ENCODE measurements at regions of chr3 and their contacts with region 1.

Region 1: DNA sequence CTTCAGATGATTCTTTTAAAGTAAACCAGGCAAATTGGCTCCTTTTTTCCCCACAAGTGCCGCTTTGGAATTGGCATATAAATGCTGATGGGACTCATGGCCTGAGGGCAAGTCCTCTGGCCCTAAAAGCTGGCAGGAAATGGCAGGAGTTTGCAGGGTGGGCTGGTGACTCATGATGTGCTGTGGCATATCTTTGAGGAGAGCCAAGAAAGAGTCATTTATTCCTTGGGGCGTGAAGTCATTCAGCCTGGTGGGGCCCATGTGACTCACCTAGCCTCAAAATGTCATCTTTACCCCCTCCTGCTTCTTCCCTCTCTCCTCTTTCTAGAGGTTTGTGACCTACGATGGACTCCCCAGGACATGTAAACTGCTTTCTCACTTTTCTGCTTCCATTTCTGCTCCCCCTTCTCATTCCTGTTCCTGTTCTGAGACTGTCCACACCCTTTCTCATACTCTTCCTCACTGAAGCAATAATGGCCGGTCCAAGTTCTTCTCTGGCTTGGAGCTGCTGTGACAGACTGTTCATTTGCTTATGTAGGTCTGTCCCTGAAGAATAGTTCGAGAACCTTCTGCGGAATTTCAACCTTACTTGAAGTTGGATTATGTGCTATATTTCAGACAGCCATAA is 326.1 kb downstream of the SATB1 start:
- DNase-seq: peak; percentile 99
- ATAC-seq: peak; percentile 83
- H3K4me3 ChIP-seq: peak overlapping the region; percentile 41; the same call in 1 of the 2 replicates
- H3K27ac ChIP-seq: peak overlapping the region; percentile 99
- H3K4me1 ChIP-seq: peaks cover 43% of the 10 kb centered on the region
- H3K27me3 ChIP-seq: no peaks in the 10 kb centered on the region
- CTCF ChIP-seq: no peak

Region 2: DNA sequence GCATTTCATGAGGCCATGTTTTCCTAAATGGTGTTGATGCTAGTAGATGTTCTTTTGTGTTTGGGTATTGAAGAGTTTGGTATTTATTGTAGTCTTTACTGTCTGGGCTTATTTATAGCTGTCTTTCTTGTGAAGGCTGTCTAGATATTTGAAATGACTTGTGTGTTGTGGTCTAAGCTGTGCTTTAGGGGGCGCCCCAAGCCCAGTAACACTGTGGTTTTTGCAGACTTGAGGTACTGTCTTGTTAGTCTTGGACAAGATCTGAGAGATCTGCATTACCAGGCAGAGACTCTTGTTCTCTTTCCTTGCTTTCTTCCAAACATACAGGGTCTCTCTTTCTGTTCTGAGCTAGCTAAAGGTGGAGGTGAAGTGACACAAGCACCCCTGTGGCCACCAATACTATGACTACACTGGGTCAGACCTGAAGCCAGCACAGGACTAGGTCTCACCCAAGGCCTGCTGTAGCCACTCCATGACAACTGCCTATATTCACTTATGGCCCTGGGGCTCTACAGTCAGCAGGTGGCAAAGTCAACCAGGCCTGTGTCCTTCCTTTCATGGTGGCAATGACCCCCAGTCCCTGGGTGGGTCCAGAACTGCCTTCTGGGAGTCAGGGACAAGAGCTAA is 204.5 kb before region 1 on chr3:
- CTCF ChIA-PET with region 1: interaction called, 4 read pairs
- POLR2A ChIA-PET with region 1: no interaction called
- intact Hi-C with region 1: loop called (anchors 2 kb)
- DNase-seq: peak; percentile 73
- ATAC-seq: peak; percentile 85
- H3K4me3 ChIP-seq: no peak overlapping the region
- H3K27ac ChIP-seq: no peak overlapping the region
- H3K4me1 ChIP-seq: peaks cover 13% of the 10 kb centered on the region
- H3K27me3 ChIP-seq: no peaks in the 10 kb centered on the region
- CTCF ChIP-seq: peak; percentile 78

Region 3: DNA sequence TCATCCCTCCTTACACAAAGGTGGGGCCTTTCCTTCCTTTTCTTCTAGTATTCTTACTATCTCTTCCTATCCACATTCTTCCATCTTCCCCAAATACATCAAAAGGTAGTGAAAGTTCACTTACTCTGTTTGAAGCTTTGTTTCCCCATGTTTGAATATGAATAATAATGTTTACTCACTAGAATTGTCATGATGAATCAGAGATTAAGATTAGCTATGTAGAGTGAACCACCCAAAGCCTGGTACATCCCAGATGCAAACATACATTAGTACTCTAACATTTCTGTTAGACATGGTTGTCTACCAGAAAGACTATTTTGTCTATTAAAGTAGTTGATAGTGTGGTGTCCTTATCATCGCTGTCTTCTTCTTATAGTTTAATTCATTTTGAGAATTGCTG is 29.5 kb before region 1 on chr3:
- CTCF ChIA-PET with region 1: no interaction called
- POLR2A ChIA-PET with region 1: no interaction called
- intact Hi-C with region 1: loop called (anchors 1 kb)
- DNase-seq: no peak
- ATAC-seq: peak; percentile 90
- H3K4me3 ChIP-seq: no peak overlapping the region
- H3K27ac ChIP-seq: peak overlapping the region; percentile 84
- H3K4me1 ChIP-seq: peaks cover 56% of the 10 kb centered on the region
- H3K27me3 ChIP-seq: no peaks in the 10 kb centered on the region
- CTCF ChIP-seq: no peak

Region 4: DNA sequence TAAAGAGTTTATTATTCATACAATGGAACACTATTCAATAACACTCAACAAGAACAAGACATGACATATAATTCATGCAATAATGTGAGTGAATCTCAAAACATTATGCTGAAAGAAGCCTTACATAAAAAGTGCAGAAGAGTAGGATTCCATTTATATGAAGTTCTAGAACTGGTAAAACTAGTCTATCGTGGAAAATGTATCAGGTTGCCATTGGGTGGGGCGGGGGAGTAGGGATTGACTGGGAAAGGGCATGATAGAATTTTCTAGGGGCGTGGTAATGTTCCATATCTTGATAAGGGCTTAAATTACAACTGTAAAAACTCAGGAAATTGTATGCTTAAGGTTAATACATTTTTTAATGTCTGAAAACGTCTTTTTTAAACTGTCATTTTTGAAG is 78.2 kb after region 1 on chr3:
- CTCF ChIA-PET with region 1: no interaction called
- POLR2A ChIA-PET with region 1: no interaction called
- intact Hi-C with region 1: loop called (anchors 2 kb)
- DNase-seq: peak; percentile 76
- ATAC-seq: peak; percentile 64; the same call in 1 of the 2 replicates
- H3K4me3 ChIP-seq: no peak overlapping the region
- H3K27ac ChIP-seq: no peak overlapping the region
- H3K4me1 ChIP-seq: peaks cover 15% of the 10 kb centered on the region
- H3K27me3 ChIP-seq: no peaks in the 10 kb centered on the region
- CTCF ChIP-seq: no peak

Region 5: DNA sequence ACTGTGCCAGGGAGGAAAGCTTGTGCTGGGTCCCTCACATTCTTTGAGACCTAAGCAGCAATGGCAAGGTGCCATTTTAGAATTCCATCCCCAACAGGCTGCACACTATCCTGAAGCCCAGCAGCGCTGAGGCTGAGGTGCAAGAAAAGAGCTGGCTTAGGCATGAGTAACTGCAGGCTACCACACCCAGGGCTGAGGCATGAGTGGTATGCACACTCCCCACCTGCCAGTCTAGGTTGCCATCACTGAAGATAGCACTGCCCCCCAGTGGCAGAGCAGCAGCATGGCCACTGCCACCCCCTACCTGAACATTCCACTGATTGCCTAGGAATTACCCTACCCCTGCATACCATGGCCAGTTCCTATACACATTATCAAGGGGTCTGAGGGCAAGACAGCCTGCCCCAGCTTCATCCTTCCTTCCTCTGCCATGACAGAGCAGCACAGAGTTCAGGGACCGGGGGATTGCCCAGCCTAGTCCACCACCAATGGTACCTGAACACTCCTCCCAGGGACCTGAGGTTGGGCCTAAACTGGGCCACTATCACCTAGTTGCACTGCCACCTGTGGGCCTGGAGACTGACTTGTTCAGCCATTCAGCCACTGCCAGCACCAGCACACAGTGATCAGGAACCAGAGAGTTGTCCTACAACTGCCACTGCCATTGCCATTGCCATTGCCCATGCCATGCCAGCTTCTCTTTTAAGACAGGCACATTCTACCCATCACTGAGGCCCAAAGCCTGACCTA is 196.3 kb after region 1 on chr3:
- CTCF ChIA-PET with region 1: interaction called, 3 read pairs
- POLR2A ChIA-PET with region 1: no interaction called
- intact Hi-C with region 1: loop called (anchors 2 kb)
- DNase-seq: peak; percentile 97
- ATAC-seq: peak; percentile 100
- H3K4me3 ChIP-seq: no peak overlapping the region
- H3K27ac ChIP-seq: peak overlapping the region; percentile 31
- H3K4me1 ChIP-seq: peaks cover 10% of the 10 kb centered on the region
- H3K27me3 ChIP-seq: no peaks in the 10 kb centered on the region
- CTCF ChIP-seq: peak; percentile 96

Measured in PC-3 (cell line).